PC-9 (cell line): ENCODE measurements at regions of chr1 and their contacts with region 1.

Region 1: DNA sequence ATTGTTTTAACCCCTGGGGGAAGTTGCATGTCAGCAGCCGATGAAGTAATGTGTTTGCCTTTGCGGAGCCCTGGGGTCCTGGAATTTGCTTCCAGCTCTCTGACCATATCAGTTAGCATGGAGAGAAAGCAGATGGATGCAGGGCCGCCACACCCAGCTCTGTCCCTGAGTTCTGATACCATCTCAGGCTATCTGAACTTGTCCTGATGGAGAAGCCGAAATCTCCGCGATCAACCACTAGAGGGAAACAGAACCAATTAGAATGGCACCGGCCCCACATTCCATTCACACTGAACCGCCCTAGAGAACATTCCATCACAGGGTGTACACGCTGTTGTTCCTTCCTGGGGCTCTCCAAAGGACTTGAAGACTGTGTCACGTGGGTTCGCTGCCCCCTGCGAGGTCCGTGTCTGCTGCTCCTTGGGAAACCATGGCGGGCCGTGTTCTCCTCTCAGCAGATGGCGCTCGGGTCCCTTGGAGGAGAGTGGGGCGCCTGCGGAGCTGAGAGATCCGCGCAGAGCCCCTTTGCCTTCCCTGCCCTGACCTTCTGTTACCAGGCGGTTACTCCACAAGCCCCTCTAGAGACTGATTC is 75.4 kb downstream of the ABCA4 start:
- DNase-seq: peak; percentile 92 to 97
- H3K4me3 ChIP-seq: no peak overlapping the region
- H3K27ac ChIP-seq: peak overlapping the region; percentile 28
- H3K4me1 ChIP-seq: peaks cover 30% of the 10 kb centered on the region
- H3K27me3 ChIP-seq: no peaks in the 10 kb centered on the region
- CTCF ChIP-seq: peak; percentile 90

Region 2: GRCh38 chr1:94068999-94069918 is 23.7 kb after region 1 on chr1:
- CTCF ChIA-PET with region 1: interaction called, 3 read pairs
- POLR2A ChIA-PET with region 1: no interaction called
- intact Hi-C with region 1: loop called (anchors 2 kb)
- DNase-seq: peak; percentile 58 to 97
- H3K4me3 ChIP-seq: no peak overlapping the region
- H3K27ac ChIP-seq: peak overlapping the region; percentile 89
- H3K4me1 ChIP-seq: peaks cover 54% of the 10 kb centered on the region
- H3K27me3 ChIP-seq: no peaks in the 10 kb centered on the region
- CTCF ChIP-seq: no peak

Region 3: DNA sequence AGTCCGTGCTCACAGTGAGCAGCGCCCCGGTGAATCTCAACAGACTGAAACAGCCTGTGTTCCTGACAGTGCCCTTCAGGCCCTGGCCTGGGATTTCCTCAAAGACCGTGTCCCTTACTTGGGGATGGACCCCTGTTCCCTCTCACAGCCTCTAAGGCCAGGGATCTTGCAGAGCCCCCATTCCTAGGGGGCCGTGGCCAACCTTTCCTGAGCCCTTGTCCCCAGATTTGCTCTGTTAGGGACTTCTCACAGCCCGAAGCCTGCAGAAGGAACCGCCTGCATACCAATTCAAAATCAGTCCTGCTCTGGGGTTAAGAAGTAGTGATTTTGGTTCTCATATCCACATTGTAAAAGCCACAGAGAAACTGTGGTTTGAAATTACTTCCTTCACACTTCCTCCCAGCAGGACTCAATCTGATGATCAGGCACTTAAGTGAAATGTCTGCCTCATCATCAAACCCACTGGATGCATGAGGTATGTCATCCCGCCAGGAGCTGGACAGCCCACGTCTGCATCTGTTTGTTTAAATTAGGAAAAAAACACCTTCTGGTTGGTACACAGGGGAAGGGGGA is 60.5 kb after region 1 on chr1:
- CTCF ChIA-PET with region 1: interaction called, 12 read pairs
- POLR2A ChIA-PET with region 1: no interaction called
- intact Hi-C with region 1: loop called (anchors 1 kb)
- DNase-seq: peak in 1 of 2 experiments; percentile 50
- H3K4me3 ChIP-seq: no peak overlapping the region
- H3K27ac ChIP-seq: peak overlapping the region; percentile 54
- H3K4me1 ChIP-seq: peaks cover 47% of the 10 kb centered on the region
- H3K27me3 ChIP-seq: no peaks in the 10 kb centered on the region
- CTCF ChIP-seq: no peak

Region 4: GRCh38 chr1:94247138-94248094 is 201.9 kb after region 1 on chr1:
- CTCF ChIA-PET with region 1: no interaction called
- POLR2A ChIA-PET with region 1: interaction called, 5 read pairs
- intact Hi-C with region 1: loop called (anchors 5 kb)
- DNase-seq: peak; percentile 78 to 93
- H3K4me3 ChIP-seq: peak overlapping the region; percentile 84
- H3K27ac ChIP-seq: peak overlapping the region; percentile 91
- H3K4me1 ChIP-seq: peaks cover 70% of the 10 kb centered on the region
- H3K27me3 ChIP-seq: no peaks in the 10 kb centered on the region
- CTCF ChIP-seq: no peak

Region 5: DNA sequence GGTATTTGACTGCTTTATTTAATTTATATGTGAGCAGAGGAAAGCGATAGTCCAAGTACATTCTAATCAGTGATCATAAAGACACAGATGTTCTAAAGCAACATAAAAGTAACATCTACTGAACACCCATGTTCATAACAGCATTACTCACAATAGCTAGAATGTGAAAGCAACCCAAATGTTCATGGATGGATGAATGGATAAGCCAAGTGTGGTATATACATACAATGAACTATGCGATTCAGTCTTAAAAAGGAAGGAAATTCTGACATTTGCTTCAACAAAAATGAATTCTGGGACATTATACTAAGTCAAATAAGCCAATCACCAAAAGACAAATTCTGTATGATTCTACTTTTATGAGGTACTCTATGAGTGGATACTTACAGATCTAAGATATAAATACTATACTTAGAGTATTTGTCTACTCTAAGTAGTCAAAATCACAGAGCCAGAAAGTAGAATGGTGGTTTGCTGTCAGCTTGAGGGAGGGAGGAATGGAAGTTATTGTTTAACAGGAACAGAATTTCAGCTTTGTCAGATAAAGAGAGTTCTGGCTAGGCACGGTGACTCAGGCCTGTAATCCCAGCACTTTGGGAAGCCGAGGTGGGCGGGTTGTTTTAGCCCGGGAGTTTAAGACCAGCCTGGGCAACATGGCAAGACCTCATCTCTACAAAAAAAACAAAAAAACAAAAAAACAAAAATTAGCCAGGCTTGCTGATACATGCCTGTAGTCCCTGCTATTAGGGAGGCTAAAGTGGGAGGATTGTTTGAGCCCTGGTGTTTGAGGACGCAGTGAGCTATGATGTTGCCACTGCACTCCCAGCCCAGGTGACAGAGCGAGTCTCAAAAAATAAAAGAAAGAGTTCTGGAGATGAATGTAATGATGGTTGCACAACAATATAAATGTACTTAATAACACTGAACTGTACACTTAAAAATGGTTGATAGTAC is 271.6 kb after region 1 on chr1:
- CTCF ChIA-PET with region 1: interaction called, 10 read pairs
- POLR2A ChIA-PET with region 1: no interaction called
- intact Hi-C with region 1: no loop called
- DNase-seq: no peak
- H3K4me3 ChIP-seq: no peak overlapping the region
- H3K27ac ChIP-seq: no peak overlapping the region
- H3K4me1 ChIP-seq: peaks cover 26% of the 10 kb centered on the region
- H3K27me3 ChIP-seq: no peaks in the 10 kb centered on the region
- CTCF ChIP-seq: no peak

Region 6: GRCh38 chr1:94592571-94592920 is 547.0 kb after region 1 on chr1:
- CTCF ChIA-PET with region 1: interaction called, 13 read pairs
- POLR2A ChIA-PET with region 1: no interaction called
- intact Hi-C with region 1: no loop called
- DNase-seq: no peak
- H3K4me3 ChIP-seq: no peak overlapping the region
- H3K27ac ChIP-seq: no peak overlapping the region
- H3K4me1 ChIP-seq: peaks cover 15% of the 10 kb centered on the region
- H3K27me3 ChIP-seq: no peaks in the 10 kb centered on the region
- CTCF ChIP-seq: no peak